Tibial artery (tissue), 4 donors: ENCODE measurements at regions of chr10 and their contacts with region 1.

Region 1: GRCh38 chr10:60944159-60944909 is at the start of gene RHOBTB1:
- DNase-seq: peak; percentile 78 to 91
- H3K4me3 ChIP-seq: peak within 1 kb of the TSS; percentile 81 to 87
- H3K27ac ChIP-seq: peak within 1 kb of the TSS; percentile 97 to 99
- H3K4me1 ChIP-seq: peaks cover 0 to 24% (median 10%) of the 10 kb centered on the region in 4 donors
- H3K27me3 ChIP-seq: no peaks in the 10 kb centered on the region
- CTCF ChIP-seq: no peak

Region 2: GRCh38 chr10:60594476-60595051 is 349.8 kb before region 1 on chr10:
- intact Hi-C with region 1: no loop called
- DNase-seq: no peak
- H3K4me3 ChIP-seq: no peak overlapping the region
- H3K27ac ChIP-seq: no peak overlapping the region
- H3K4me1 ChIP-seq: no peaks in the 10 kb centered on the region
- H3K27me3 ChIP-seq: no peaks in the 10 kb centered on the region
- CTCF ChIP-seq: no peak

Region 3: GRCh38 chr10:60905580-60905979 is 38.8 kb before region 1 on chr10:
- intact Hi-C with region 1: loop called (anchors 5 kb)
- DNase-seq: peak; percentile 63 to 90
- H3K4me3 ChIP-seq: no peak overlapping the region
- H3K27ac ChIP-seq: peak overlapping the region; percentile 45 to 53
- H3K4me1 ChIP-seq: peaks cover 3 to 59% (median 20%) of the 10 kb centered on the region in 4 donors
- H3K27me3 ChIP-seq: no peaks in the 10 kb centered on the region
- CTCF ChIP-seq: no peak

Region 4: GRCh38 chr10:61937631-61938351 is 993.5 kb after region 1 on chr10:
- intact Hi-C with region 1: no loop called
- DNase-seq: no peak
- H3K4me3 ChIP-seq: no peak overlapping the region
- H3K27ac ChIP-seq: peak overlapping the region; percentile 51 to 69
- H3K4me1 ChIP-seq: peaks cover 0 to 75% (median 34%) of the 10 kb centered on the region in 4 donors
- H3K27me3 ChIP-seq: no peaks in the 10 kb centered on the region
- CTCF ChIP-seq: no peak